ENCODE measurements at regions of chr17 and their contacts with region 1.

Region 1: GRCh38 chr17:75046582-75047289 is at the starts of genes ATP5PD and KCTD2:
- DNase-seq: peak; percentile 96
- ATAC-seq: peak; percentile 97
- H3K4me3 ChIP-seq: peak within 1 kb of the TSS; percentile 77 to 97 (median 89)
- H3K4me3 Mint-ChIP-seq: peak within 1 kb of the TSS; percentile 96
- H3K27ac ChIP-seq: peak within 1 kb of the TSS; percentile 46 to 89
- H3K27ac Mint-ChIP-seq: peak within 1 kb of the TSS; percentile 94
- H3K4me1 ChIP-seq: peaks cover 13 to 16% of the 10 kb centered on the region in 2 donors
- H3K4me1 Mint-ChIP-seq: peaks cover 27% of the 10 kb centered on the region
- H3K27me3 ChIP-seq: no peaks in the 10 kb centered on the region
- H3K27me3 Mint-ChIP-seq: no peaks in the 10 kb centered on the region
- CTCF ChIP-seq: no peak
- total RNA-seq, gene ATP5PD: 98.8 and 101 TPM in 2 replicates
- total RNA-seq, gene KCTD2: 23.2 and 24.6 TPM in 2 replicates

Region 2: DNA sequence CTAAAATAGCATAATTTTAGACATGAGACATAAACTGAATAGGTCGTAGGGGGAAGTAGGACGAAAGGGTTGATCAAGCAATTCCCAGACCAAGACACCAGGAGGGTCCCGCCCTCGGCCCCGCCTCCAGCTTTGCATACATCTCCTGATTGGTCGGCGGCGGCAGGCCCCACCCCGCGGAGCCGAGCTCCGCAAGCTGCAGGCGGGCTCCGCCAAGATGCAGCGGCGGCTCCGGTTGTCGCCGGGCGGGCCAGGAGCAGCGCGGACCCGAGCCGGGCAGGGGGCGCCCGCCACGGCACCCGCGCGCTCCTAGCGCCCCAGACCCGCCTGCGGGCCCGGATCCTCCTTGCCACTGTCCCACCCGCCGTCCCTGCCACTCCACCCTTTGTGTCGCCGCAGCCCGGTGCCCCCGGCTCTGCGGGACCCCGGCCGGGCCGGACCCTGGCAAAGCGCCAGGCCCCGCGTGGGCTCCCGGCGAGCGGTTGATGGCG is 59.3 kb before region 1 on chr17 and contains the start of gene CDR2L:
- CTCF ChIA-PET with region 1: no interaction called
- POLR2A ChIA-PET with region 1: no interaction called
- intact Hi-C with region 1: loop called (anchors 2 kb)
- DNase-seq: peak; percentile 95
- ATAC-seq: peak; percentile 99
- H3K4me3 ChIP-seq: peak within 1 kb of the TSS in 4 of 5 experiments; percentile 40 to 67 (median 53)
- H3K4me3 Mint-ChIP-seq: peak within 1 kb of the TSS; percentile 92
- H3K27ac ChIP-seq: no peak within 1 kb of the TSS
- H3K27ac Mint-ChIP-seq: peak within 1 kb of the TSS; percentile 53
- H3K4me1 ChIP-seq: peaks cover 16 to 20% of the 10 kb centered on the region in 2 donors
- H3K4me1 Mint-ChIP-seq: peaks cover 12% of the 10 kb centered on the region
- H3K27me3 ChIP-seq: peaks cover 0 to 41% (median 16%) of the 10 kb centered on the region in 4 experiments
- H3K27me3 Mint-ChIP-seq: peaks cover 16% of the 10 kb centered on the region
- CTCF ChIP-seq: no peak
- total RNA-seq, gene CDR2L: not detected in 2 replicates

Region 3: GRCh38 chr17:75034236-75034908 is 12.4 kb before region 1 on chr17:
- CTCF ChIA-PET with region 1: no interaction called
- POLR2A ChIA-PET with region 1: interaction called, 6 read pairs
- intact Hi-C with region 1: loop called (anchors 1 kb)
- DNase-seq: peak; percentile 87
- ATAC-seq: peak; percentile 70
- H3K4me3 ChIP-seq: peak overlapping the region; percentile 59 to 81 (median 71)
- H3K4me3 Mint-ChIP-seq: peak overlapping the region; percentile 99
- H3K27ac ChIP-seq: peak overlapping the region in 1 of 2 donors; percentile 69
- H3K27ac Mint-ChIP-seq: peak overlapping the region; percentile 97
- H3K4me1 ChIP-seq: peaks cover 15 to 34% of the 10 kb centered on the region in 2 donors
- H3K4me1 Mint-ChIP-seq: peaks cover 34% of the 10 kb centered on the region
- H3K27me3 ChIP-seq: no peaks in the 10 kb centered on the region
- H3K27me3 Mint-ChIP-seq: no peaks in the 10 kb centered on the region
- CTCF ChIP-seq: no peak

Region 4: DNA sequence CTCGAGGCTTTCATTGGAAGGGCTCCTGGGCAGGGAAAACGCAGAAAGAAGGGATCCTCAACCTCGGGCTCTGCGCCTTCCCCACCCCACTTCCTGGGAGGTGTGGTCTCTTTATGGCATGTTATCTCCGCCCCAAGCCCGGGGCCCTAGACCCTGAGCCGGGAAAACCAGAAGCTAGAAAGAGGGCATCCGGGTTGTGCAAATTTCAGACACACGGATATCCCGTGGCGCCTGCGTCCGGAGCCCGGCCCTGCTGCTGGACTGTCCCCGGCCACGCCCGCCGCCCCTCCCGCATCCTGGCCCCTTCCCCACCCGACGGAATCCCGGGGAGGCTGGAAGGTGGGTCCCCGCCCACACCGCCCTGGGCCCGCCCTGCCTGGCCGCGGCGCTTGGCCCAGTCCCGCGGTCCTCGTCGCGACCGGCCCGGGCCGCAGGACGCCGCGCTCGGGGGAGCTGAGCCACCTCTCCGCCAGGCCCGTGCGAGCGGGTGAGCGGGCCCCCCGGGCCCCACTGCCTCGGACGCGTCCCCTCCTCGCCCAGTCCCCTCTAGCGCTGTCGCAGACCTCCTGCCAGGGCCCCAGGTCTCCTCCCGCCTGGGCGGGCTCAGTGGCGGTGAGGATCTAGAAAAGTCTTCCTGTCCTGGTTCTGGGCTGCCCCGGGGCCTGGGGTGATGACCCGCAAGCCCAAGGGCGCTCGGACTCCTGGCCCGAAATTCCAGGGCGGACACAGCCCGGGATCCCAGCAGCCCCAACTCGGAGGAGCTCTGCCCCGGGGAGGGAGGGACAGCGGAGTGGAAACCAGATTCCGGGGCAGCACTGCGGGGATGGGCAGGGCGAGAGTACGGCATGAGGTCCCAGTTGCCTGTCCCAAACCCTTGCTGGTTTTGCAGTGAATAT is 41.1 kb after region 1 on chr17 and contains the start of gene SLC16A5:
- CTCF ChIA-PET with region 1: no interaction called
- POLR2A ChIA-PET with region 1: no interaction called
- intact Hi-C with region 1: no loop called
- DNase-seq: peak; percentile 57
- ATAC-seq: peak; percentile 78
- H3K4me3 ChIP-seq: peak within 1 kb of the TSS in 4 of 5 experiments; percentile 53 to 76 (median 60)
- H3K4me3 Mint-ChIP-seq: peak within 1 kb of the TSS; percentile 83
- H3K27ac ChIP-seq: peak within 1 kb of the TSS; percentile 5 to 70
- H3K27ac Mint-ChIP-seq: peak within 1 kb of the TSS; percentile 76
- H3K4me1 ChIP-seq: peaks cover 11 to 19% of the 10 kb centered on the region in 2 donors
- H3K4me1 Mint-ChIP-seq: peaks cover 16% of the 10 kb centered on the region
- H3K27me3 ChIP-seq: peaks cover 0 to 7% (median 0%) of the 10 kb centered on the region in 4 experiments
- H3K27me3 Mint-ChIP-seq: peaks cover 4% of the 10 kb centered on the region
- CTCF ChIP-seq: no peak
- total RNA-seq, gene SLC16A5: 9.3 and 13.7 TPM in 2 replicates

Region 5: DNA sequence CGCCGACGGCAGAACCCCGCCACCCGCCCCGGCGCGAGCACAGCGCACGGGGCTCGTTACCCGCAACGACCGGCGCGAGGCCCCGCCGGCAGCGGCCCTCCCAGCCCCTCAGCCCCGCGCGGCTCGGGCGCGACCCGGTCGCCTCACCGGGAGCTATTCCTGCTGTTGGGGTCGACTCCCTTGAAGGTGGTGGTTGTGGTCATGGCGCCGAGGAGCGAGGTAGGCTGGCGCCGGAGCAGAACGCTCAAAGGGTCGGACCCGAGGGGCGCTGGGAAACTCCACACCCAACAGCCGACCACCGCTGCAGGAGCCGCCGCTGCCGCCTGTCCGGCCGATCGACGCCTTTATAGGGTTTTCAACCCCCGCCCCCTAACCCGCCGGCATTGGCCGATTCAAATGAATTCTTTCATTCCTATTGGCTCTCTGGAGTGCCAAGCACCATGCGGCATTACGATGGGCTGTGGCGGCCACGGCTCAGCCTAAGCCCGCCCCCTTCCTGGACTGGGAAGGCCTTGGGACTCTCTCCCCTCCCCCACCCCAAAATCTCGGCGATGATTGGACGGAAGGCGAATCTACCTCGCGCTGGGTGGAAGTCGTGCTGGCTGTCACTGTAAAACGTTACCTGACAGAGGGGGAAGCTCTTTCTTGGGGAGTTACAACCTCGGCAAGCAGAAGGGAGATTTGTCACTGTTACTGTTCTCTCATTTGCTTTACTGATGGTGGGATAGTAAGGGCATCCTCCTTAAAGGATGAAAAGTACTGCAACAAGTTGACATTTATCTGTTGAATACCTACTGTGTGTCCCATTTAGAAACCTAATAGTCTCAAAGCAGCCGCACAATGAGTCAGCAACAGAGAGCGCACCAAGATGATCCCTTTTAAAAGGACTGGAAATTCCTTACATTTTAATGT is 107.7 kb after region 1 on chr17 and contains the start of gene JPT1:
- CTCF ChIA-PET with region 1: no interaction called
- POLR2A ChIA-PET with region 1: no interaction called
- intact Hi-C with region 1: loop called (anchors 2 kb)
- DNase-seq: peak; percentile 98
- ATAC-seq: peak; percentile 97
- H3K4me3 ChIP-seq: peak within 1 kb of the TSS; percentile 69 to 83 (median 74)
- H3K4me3 Mint-ChIP-seq: peak within 1 kb of the TSS; percentile 95
- H3K27ac ChIP-seq: peak within 1 kb of the TSS; percentile 2 to 65
- H3K27ac Mint-ChIP-seq: peak within 1 kb of the TSS; percentile 89
- H3K4me1 ChIP-seq: peaks cover 15 to 27% of the 10 kb centered on the region in 2 donors
- H3K4me1 Mint-ChIP-seq: peaks cover 30% of the 10 kb centered on the region
- H3K27me3 ChIP-seq: no peaks in the 10 kb centered on the region
- H3K27me3 Mint-ChIP-seq: no peaks in the 10 kb centered on the region
- CTCF ChIP-seq: no peak
- total RNA-seq, gene JPT1: 37.6 and 37.8 TPM in 2 replicates